Right cardiac atrium (tissue), 5 donors: ENCODE measurements at regions of chr4 and their contacts with region 1.

Region 1: GRCh38 chr4:6087673-6088341 is 69.6 kb upstream of the C4orf50 start:
- DNase-seq: no peak
- ATAC-seq: peak in 1 of 2 donors; percentile 37
- H3K4me3 ChIP-seq: no peak overlapping the region
- H3K27ac ChIP-seq: no peak overlapping the region
- H3K4me1 ChIP-seq: no peaks in the 10 kb centered on the region
- H3K27me3 ChIP-seq: no peaks in the 10 kb centered on the region

Region 2: GRCh38 chr4:5998333-5998936 is 89.4 kb before region 1 on chr4:
- intact Hi-C with region 1: loop called in 2 of 4 experiments (anchors 5 kb)
- DNase-seq: peak; percentile 31 to 73 (median 70)
- ATAC-seq: peak; percentile 56 to 75
- H3K4me3 ChIP-seq: no peak overlapping the region
- H3K27ac ChIP-seq: no peak overlapping the region
- H3K4me1 ChIP-seq: no peaks in the 10 kb centered on the region
- H3K27me3 ChIP-seq: no peaks in the 10 kb centered on the region

Region 3: GRCh38 chr4:6250235-6250983 is 162.6 kb after region 1 on chr4:
- intact Hi-C with region 1: no loop called
- DNase-seq: no peak
- ATAC-seq: peak in 1 of 2 donors; percentile 47
- H3K4me3 ChIP-seq: no peak overlapping the region
- H3K27ac ChIP-seq: no peak overlapping the region
- H3K4me1 ChIP-seq: no peaks in the 10 kb centered on the region
- H3K27me3 ChIP-seq: no peaks in the 10 kb centered on the region